Activated naive CD4-positive, alpha-beta T cell treated with anti-CD3 and anti-CD28 coated beads for 36 hours (primary cell): ENCODE measurements at regions of chr2 and their contacts with region 1.

Region 1: GRCh38 chr2:28594289-28595108 is 98.6 kb downstream of the PLB1 start:
- DNase-seq: peak; percentile 96
- H3K4me3 Mint-ChIP-seq: peak overlapping the region; percentile 54
- H3K27ac Mint-ChIP-seq: peak overlapping the region; percentile 82
- H3K4me1 Mint-ChIP-seq: peaks cover 14% of the 10 kb centered on the region
- H3K27me3 Mint-ChIP-seq: no peaks in the 10 kb centered on the region

Region 2: GRCh38 chr2:28469304-28469703 is 125.2 kb before region 1 on chr2:
- CTCF ChIA-PET with region 1: no interaction called
- intact Hi-C with region 1: no loop called
- DNase-seq: no peak
- H3K4me3 Mint-ChIP-seq: no peak overlapping the region
- H3K27ac Mint-ChIP-seq: no peak overlapping the region
- H3K4me1 Mint-ChIP-seq: peaks cover 39% of the 10 kb centered on the region
- H3K27me3 Mint-ChIP-seq: no peaks in the 10 kb centered on the region

Region 3: DNA sequence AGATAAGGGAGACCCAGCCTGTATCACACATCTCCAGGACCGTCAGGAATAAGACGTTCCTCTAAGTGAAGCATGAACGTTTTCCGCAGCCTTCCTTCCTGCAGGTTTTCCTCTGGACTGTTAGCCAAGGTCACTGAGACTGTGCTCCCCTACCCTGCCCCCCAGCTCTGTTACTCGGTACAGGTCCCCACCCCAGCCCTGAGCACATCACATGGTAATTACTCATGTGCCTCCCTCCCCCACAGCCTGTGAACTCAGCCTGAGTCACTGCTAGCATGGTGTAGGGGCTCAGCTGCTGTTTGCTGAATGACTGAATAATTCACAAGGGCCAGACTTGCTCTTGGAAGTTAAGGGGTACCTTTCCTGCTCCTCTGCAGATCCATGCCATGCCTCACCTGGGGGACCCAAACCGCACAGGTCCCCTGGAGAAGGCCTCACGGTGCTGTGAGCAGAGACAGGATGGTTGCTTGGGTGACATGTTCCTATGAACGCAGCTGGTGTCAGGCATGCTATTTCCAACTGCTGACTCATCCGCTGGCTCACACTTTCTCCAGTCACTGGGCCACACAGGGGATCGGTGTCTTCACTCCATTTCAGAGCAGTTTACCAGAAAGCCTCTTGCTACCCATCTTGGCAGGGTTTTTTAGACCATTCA is 10.5 kb before region 1 on chr2:
- CTCF ChIA-PET with region 1: interaction called, 10 read pairs
- intact Hi-C with region 1: loop called (anchors 1 kb)
- DNase-seq: peak; percentile 89
- H3K4me3 Mint-ChIP-seq: peak overlapping the region; percentile 39
- H3K27ac Mint-ChIP-seq: peak overlapping the region; percentile 77
- H3K4me1 Mint-ChIP-seq: peaks cover 45% of the 10 kb centered on the region
- H3K27me3 Mint-ChIP-seq: no peaks in the 10 kb centered on the region

Region 4: GRCh38 chr2:28621172-28622100 is 26.9 kb after region 1 on chr2:
- CTCF ChIA-PET with region 1: interaction called, 20 read pairs
- intact Hi-C with region 1: loop called (anchors 1 kb)
- DNase-seq: peak; percentile 91
- H3K4me3 Mint-ChIP-seq: peak overlapping the region; percentile 41
- H3K27ac Mint-ChIP-seq: peak overlapping the region; percentile 94
- H3K4me1 Mint-ChIP-seq: peaks cover 92% of the 10 kb centered on the region
- H3K27me3 Mint-ChIP-seq: no peaks in the 10 kb centered on the region

Region 5: GRCh38 chr2:28713577-28714298 is 119.2 kb after region 1 on chr2:
- CTCF ChIA-PET with region 1: no interaction called
- intact Hi-C with region 1: loop called (anchors 1 kb)
- DNase-seq: peak; percentile 42
- H3K4me3 Mint-ChIP-seq: no peak overlapping the region
- H3K27ac Mint-ChIP-seq: peak overlapping the region; percentile 87
- H3K4me1 Mint-ChIP-seq: peaks cover 28% of the 10 kb centered on the region
- H3K27me3 Mint-ChIP-seq: no peaks in the 10 kb centered on the region

Region 6: GRCh38 chr2:28780496-28780895 is 186.0 kb after region 1 on chr2:
- CTCF ChIA-PET with region 1: interaction called, 11 read pairs
- intact Hi-C with region 1: no loop called
- DNase-seq: no peak
- H3K4me3 Mint-ChIP-seq: no peak overlapping the region
- H3K27ac Mint-ChIP-seq: peak overlapping the region; percentile 59
- H3K4me1 Mint-ChIP-seq: peaks cover 26% of the 10 kb centered on the region
- H3K27me3 Mint-ChIP-seq: no peaks in the 10 kb centered on the region

Region 7: GRCh38 chr2:28870146-28870891 is 275.8 kb after region 1 on chr2 and contains the start of gene TRMT61B:
- CTCF ChIA-PET with region 1: no interaction called
- intact Hi-C with region 1: loop called (anchors 1 kb)
- DNase-seq: peak; percentile 97
- H3K4me3 Mint-ChIP-seq: peak within 1 kb of the TSS; percentile 89
- H3K27ac Mint-ChIP-seq: peak within 1 kb of the TSS; percentile 89
- H3K4me1 Mint-ChIP-seq: peaks cover 31% of the 10 kb centered on the region
- H3K27me3 Mint-ChIP-seq: no peaks in the 10 kb centered on the region
- total RNA-seq, gene TRMT61B: 13.6 to 15.5 TPM